Naive thymus-derived CD4-positive, alpha-beta T cell (primary cell): ENCODE measurements at regions of chr11 and their contacts with region 1.

Region 1: DNA sequence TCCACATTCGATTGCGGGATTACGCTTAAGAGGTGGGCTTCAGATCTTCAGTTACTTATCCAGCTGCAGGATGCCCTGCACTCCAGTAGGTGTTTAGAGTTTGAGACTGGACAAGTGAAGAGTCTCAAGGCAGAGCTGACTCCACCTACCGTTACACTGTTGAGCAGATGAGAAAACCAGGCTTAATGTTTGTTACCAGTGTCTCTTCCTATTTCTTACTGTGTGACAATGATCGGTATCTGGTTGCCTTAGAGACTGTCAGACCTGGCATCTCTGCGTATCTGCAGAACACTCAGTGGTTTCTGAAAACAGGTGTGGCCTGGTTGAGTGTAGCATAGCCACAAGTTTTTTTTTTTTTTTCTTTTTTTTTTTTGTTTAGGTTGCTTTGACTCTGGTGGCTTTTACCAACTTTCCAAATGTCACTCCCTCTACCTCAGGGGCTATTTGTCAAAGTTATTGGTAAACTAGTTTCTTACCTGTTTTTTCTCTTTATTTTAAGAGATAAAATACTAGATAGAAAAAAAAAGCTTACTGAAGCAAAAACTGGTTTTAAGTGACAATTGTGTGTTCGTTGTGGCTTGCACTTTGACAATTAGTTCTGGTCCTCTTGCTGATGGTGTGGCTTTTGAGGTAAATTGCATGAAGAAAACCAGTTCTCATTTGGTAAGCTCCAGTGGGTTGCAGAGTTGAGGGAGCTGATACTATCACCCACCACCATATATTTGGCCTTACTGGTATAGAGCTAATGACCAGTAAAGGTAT is 284.8 kb downstream of the ETS1 start:
- DNase-seq: peak; percentile 39 to 97 (median 92)
- ATAC-seq: peak; percentile 92
- H3K4me3 ChIP-seq: peak overlapping the region; percentile 52
- H3K4me3 Mint-ChIP-seq: peak overlapping the region; percentile 81 to 98 (median 93)
- H3K27ac ChIP-seq: peak overlapping the region; percentile 98
- H3K27ac Mint-ChIP-seq: peak overlapping the region; percentile 93 to 100 (median 98)
- H3K4me1 ChIP-seq: peaks cover 83 to 95% of the 10 kb centered on the region in 2 donors
- H3K4me1 Mint-ChIP-seq: peaks cover 52 to 92% (median 88%) of the 10 kb centered on the region in 7 donors
- H3K27me3 ChIP-seq: no peaks in the 10 kb centered on the region
- H3K27me3 Mint-ChIP-seq: no peaks in the 10 kb centered on the region

Region 2: DNA sequence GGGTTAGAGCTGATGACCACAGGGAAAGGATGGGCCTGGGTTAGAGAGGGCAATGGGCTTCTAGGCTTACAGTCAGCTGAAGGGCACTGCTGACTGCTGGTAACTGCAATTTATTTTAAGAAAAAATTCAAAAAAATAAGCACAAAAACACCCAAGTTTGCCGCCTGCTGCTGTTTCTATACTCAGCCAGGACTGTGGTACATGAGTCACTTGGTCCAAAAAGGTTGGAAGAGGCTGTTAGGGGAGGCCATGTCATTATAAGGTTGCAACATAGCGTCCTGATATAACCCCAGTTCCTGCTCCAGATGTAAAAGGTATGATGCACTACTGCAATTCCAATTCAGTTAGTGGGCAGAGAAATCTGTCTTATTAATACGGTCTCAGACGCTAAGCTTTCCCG is 185.9 kb after region 1 on chr11:
- CTCF ChIA-PET with region 1: interaction called, 3 read pairs
- POLR2A ChIA-PET with region 1: interaction called, 45 read pairs
- intact Hi-C with region 1: no loop called
- DNase-seq: peak in 1 of 9 donors; percentile 73
- ATAC-seq: peak; percentile 31
- H3K4me3 ChIP-seq: no peak overlapping the region
- H3K4me3 Mint-ChIP-seq: peak overlapping the region; percentile 62 to 99 (median 76)
- H3K27ac ChIP-seq: peak overlapping the region; percentile 97
- H3K27ac Mint-ChIP-seq: peak overlapping the region; percentile 73 to 99 (median 96)
- H3K4me1 ChIP-seq: peaks cover 96% of the 10 kb centered on the region in 2 donors
- H3K4me1 Mint-ChIP-seq: peaks cover 70 to 100% (median 100%) of the 10 kb centered on the region in 7 donors
- H3K27me3 ChIP-seq: no peaks in the 10 kb centered on the region
- H3K27me3 Mint-ChIP-seq: no peaks in the 10 kb centered on the region